ENCODE measurements at regions of chr12 and their contacts with region 1.

Region 1: DNA sequence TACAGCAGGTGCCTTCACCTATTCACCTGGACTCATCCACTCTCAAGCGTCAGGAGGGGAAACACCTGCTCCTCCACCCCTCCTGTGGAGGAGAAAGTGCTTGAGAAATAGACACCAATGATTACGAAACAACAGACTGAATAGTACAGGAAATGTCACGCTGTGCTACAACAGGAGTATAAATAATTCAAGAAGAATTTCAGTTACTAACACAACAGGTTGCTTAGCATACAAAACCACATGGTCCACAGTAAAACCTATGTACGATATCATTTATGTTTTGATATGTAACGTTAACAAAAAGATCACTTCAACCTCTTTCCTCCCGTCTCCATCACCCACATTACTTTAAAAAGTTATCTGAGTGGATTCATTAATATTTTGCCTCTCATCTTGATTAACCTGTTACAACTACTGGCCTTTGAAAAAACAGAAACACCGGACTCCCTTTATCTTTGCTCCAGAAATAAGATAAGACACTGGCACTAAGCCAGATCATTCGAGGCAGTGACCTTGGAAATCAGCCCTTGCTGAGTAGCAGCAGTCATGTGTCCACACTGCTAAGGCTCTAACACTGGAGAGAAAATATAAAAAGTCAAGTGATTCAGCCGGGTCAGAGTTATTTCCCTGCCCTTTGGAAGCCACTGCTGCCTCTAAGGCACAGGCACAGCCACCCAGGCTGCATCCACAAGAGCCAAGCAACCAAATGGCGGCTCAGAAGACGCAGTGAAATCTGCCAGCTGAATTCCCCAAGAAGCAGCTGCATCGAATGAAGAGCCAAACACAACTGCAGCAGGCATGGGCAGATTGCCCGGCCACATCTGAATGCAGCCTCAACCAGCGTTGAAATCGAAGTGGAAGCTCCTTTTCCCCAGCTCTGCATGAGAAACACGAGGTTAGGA is 40.9 kb downstream of the NT5DC3 start:
- DNase-seq: peak; percentile 62
- H3K4me3 Mint-ChIP-seq: peak overlapping the region; percentile 36
- H3K27ac Mint-ChIP-seq: peak overlapping the region; percentile 81
- H3K4me1 Mint-ChIP-seq: peaks cover 60% of the 10 kb centered on the region
- H3K27me3 Mint-ChIP-seq: no peaks in the 10 kb centered on the region
- CTCF ChIP-seq: no peak

Region 2: DNA sequence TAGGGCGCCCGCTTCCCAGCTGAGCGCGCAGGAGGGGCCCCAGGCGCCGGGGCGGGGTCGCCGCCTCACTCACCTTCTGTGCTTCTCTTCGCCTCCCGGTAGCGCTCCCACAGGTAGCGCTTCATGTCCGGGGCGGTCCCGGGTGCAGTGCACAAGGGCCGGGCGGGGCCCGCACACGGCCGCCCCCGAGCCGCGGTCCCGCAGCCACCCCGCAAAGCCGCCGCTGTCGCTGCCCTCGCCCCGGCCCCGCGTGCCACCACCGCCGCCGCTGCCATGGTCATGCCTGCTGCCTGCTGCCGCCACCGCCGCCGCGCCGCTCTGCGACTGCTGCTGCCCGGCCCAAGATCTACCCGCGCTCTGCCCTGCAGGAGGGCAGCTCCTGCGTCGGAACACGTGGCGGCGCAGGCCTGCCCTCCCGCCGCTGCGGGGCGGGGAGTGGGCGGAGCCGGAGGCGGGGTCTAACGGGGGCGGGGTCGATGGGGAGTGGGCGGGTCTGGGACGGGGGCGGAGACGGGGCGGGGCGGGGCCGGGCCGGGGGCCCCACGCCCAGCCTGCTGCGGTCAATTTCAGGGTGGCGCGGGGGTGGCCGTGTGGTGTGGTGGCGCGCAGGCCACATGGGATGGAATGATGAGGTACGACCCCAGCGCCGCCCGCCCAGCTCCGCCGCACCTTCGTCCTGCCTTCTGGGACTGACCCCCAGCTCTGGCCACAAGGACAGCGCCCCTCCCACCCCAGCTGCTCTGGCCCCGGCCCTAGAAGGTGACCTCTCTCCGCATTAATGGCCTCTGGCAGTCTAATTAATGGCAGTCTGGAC is 41.0 kb after region 1 on chr12 and contains the start of gene NT5DC3:
- CTCF ChIA-PET with region 1: interaction called, 6 read pairs
- intact Hi-C with region 1: loop called (anchors 1 kb)
- DNase-seq: peak; percentile 92
- H3K4me3 Mint-ChIP-seq: peak within 1 kb of the TSS; percentile 90
- H3K27ac Mint-ChIP-seq: peak within 1 kb of the TSS; percentile 91
- H3K4me1 Mint-ChIP-seq: peaks cover 43% of the 10 kb centered on the region
- H3K27me3 Mint-ChIP-seq: no peaks in the 10 kb centered on the region
- CTCF ChIP-seq: no peak
- total RNA-seq, gene NT5DC3: 18.1 and 24.0 TPM in 2 replicates

Region 3: GRCh38 chr12:103858953-103859601 is 59.0 kb after region 1 on chr12:
- CTCF ChIA-PET with region 1: interaction called, 4 read pairs
- intact Hi-C with region 1: loop called (anchors 1 kb)
- DNase-seq: peak; percentile 87
- H3K4me3 Mint-ChIP-seq: no peak overlapping the region
- H3K27ac Mint-ChIP-seq: peak overlapping the region; percentile 81
- H3K4me1 Mint-ChIP-seq: peaks cover 48% of the 10 kb centered on the region
- H3K27me3 Mint-ChIP-seq: no peaks in the 10 kb centered on the region
- CTCF ChIP-seq: no peak

Region 4: DNA sequence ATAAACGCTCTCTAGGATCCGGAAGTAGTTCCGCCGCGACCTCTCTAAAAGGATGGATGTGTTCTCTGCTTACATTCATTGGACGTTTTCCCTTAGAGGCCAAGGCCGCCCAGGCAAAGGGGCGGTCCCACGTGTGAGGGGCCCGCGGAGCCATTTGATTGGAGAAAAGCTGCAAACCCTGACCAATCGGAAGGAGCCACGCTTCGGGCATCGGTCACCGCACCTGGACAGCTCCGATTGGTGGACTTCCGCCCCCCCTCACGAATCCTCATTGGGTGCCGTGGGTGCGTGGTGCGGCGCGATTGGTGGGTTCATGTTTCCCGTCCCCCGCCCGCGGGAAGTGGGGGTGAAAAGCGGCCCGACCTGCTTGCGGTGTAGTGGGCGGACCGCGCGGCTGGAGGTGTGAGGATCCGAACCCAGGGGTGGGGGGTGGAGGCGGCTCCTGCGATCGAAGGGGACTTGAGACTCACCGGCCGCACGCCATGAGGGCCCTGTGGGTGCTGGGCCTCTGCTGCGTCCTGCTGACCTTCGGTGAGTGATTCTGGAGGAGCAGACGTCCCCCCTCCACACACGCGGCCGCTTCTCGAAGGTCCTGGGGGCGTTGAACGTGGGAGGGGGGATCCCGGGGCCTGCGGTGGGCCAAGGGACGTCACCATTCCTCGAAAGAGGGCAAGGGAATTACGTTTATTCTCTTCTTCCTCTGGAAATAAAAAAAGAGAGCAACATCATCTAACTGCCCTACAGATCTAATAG is 130.1 kb after region 1 on chr12 and contains the start of gene HSP90B1:
- CTCF ChIA-PET with region 1: no interaction called
- intact Hi-C with region 1: loop called (anchors 5 kb)
- DNase-seq: peak; percentile 100
- H3K4me3 Mint-ChIP-seq: peak within 1 kb of the TSS; percentile 82
- H3K27ac Mint-ChIP-seq: peak within 1 kb of the TSS; percentile 100
- H3K4me1 Mint-ChIP-seq: peaks cover 42% of the 10 kb centered on the region
- H3K27me3 Mint-ChIP-seq: no peaks in the 10 kb centered on the region
- CTCF ChIP-seq: no peak
- total RNA-seq, gene HSP90B1: 1,299 and 1,328 TPM in 2 replicates